RWPE1 (cell line): ENCODE measurements at regions of chr11 and their contacts with region 1.

Region 1: GRCh38 chr11:126355324-126355925 is at the start of gene ST3GAL4:
- DNase-seq: peak; percentile 82
- H3K27ac ChIP-seq: peak within 1 kb of the TSS; percentile 90
- CTCF ChIP-seq: no peak

Region 2: DNA sequence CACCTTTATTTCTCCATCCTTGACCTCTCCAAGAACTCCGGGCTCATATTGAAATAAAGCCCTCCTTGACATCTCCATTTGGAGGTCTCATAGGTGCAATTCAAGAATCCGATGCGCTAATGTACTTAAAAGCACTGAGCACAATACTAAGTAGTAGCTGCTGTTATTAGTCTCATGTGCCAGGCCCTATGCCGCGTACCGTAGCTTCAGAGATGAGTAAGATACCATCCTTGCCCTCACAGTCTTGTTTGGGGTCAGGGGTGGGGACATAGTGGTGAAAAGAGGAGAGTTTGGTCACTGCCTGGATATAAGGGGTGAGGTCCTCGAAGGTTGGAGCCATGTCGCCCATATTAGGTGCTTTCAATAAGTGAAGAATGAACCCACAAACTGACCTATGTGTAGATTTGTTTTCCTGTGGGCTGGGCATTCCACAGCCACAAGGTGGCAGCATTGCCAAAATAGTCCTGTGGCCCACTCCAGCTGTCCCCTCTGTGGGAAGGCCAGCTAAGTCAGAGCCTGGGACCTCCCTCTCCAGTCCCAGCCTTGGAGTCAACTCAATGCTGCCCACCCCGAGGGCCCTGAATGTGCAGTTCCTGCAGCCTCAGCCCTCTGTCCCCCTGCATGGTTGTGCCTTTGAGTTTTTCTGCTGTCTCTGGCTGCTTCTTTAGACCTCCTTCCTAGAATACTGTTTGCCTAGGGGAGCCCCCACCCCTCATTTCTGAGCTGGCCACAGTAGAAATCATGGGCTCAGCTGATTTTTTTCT is 45.0 kb before region 1 on chr11:
- CTCF ChIA-PET with region 1: interaction called, 11 read pairs
- POLR2A ChIA-PET with region 1: no interaction called
- DNase-seq: peak; percentile 60
- H3K27ac ChIP-seq: peak overlapping the region; percentile 33; the same call in 1 of the 2 replicates
- CTCF ChIP-seq: peak; percentile 85

Region 3: DNA sequence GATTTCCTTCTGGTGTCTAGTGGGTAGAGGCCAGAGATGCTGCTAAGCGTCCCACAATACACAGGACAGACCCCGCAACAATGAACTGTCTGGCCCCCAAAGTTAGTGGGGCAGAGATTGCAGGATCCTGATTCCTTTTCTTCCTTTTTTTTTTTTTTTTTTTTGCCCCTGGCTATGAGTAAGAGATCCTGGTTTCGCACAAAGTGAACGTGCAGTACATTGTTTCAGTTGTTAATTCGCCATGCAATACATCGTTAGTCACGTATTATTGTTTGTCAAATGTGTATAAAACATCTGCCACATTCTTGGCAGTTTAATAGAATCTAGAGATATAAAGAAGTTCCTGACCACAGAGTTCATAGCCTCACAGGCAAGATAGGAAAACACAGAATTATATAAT is 20.3 kb after region 1 on chr11:
- CTCF ChIA-PET with region 1: no interaction called
- POLR2A ChIA-PET with region 1: interaction called, 11 read pairs
- DNase-seq: peak; percentile 66
- H3K27ac ChIP-seq: peak overlapping the region; percentile 96
- CTCF ChIP-seq: no peak